ENCODE measurements at regions of chr5 and their contacts with region 1.

Region 1: DNA sequence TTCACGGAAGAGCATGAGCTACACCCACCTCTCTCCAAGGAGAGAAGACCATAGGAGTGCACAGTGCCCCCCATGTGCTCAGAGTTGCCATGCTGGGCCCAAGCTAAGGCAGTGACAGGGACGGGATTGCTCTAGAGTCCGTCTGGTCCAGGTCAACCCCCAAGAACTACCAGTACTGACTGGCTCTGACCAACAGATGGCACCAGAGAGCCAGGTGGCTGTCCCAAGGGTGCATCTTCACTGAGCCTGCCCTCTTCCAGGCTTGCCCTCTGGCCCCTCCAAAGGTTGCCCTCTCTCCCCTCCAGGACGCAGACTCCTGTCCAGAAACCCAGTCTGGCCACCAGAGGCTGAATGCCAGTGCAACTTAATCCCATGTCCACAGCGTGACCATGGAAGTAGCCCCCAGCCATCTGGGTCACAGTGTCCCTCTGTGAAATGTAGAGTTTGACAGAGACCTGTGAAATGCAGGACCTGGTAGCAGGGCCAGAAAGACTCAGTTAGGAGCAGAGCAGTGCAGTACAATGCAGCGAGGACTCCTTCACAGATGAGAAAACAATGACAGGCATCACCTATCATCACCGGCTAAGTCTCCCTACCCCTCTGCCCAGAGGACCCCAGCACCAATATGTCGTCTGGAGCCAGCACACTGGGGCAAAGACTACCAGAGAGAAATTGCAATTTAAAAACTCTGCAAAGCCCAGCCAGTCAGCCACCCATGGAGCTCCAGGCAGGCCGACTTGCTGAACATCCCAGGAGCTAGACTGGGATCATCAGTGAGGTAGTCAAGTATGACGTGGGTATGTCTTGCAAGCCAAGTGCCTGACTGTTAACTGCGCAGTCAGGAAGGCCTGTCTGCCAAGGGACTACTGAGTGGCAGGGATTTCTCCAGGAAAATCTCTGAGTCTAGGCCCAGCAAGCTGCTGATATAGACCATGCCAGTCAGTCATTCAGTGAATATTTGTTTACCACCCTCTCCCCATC is 7.7 kb upstream of the SKP1 start:
- DNase-seq: peak; percentile 25 to 78 (median 72)
- ATAC-seq: peak; percentile 98
- H3K4me3 ChIP-seq: no peak overlapping the region
- H3K27ac ChIP-seq: no peak overlapping the region
- H3K4me1 ChIP-seq: no peaks in the 10 kb centered on the region
- H3K27me3 ChIP-seq: no peaks in the 10 kb centered on the region
- CTCF ChIP-seq: peak; percentile 85 to 93

Region 2: GRCh38 chr5:134289509-134290113 is 105.2 kb after region 1 on chr5:
- intact Hi-C with region 1: loop called (anchors 2 to 10 kb)
- DNase-seq: peak in 2 of 4 donors; percentile 60 to 82
- ATAC-seq: peak; percentile 99
- H3K4me3 ChIP-seq: no peak overlapping the region
- H3K27ac ChIP-seq: no peak overlapping the region
- H3K4me1 ChIP-seq: no peaks in the 10 kb centered on the region
- H3K27me3 ChIP-seq: no peaks in the 10 kb centered on the region
- CTCF ChIP-seq: peak; percentile 50 to 71